GM13977 (cell line): ENCODE measurements at regions of chr5 and their contacts with region 1.

Region 1: GRCh38 chr5:158174918-158175851 is 316.2 kb upstream of the CLINT1 start:
- DNase-seq: peak; percentile 75
- CTCF ChIP-seq: peak; percentile 86

Region 2: GRCh38 chr5:158303275-158303674 is 128.1 kb after region 1 on chr5:
- in situ Hi-C with region 1: no loop called
- DNase-seq: no peak
- CTCF ChIP-seq: no peak

Region 3: GRCh38 chr5:159112436-159112835 is 937.3 kb after region 1 on chr5:
- in situ Hi-C with region 1: loop called (anchors 10 kb)
- DNase-seq: no peak
- CTCF ChIP-seq: no peak